ENCODE measurements at regions of chr14 and their contacts with region 1.

Region 1: GRCh38 chr14:70398706-70399431 is 18.0 kb downstream of the SYNJ2BP start:
- ATAC-seq: no peak
- H3K4me3 ChIP-seq: no peak overlapping the region
- H3K27ac ChIP-seq: no peak overlapping the region
- H3K4me1 ChIP-seq: no peaks in the 10 kb centered on the region

Region 2: DNA sequence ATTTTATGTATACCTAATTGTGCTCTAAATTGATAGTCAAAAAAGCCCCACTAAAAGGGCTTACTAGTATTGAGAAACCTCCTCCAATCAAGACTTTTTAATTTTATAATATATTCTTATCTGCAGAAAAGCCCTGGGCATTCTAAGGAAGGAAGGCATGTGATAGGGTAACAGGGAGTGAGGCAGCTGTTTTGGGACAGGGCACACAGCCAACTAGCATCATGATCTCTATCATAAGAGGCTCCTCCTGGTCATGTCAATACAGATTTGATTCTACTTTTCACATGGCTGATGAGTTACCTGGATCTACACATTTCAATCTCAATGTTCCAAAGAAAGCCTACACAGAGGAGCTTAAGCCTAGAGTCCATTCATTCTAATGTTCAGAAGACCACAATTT is 126.8 kb after region 1 on chr14:
- in situ Hi-C with region 1: no loop called
- ATAC-seq: no peak
- H3K4me3 ChIP-seq: no peak overlapping the region
- H3K27ac ChIP-seq: no peak overlapping the region
- H3K4me1 ChIP-seq: no peaks in the 10 kb centered on the region

Region 3: GRCh38 chr14:70567791-70568190 is 168.9 kb after region 1 on chr14:
- in situ Hi-C with region 1: loop called in 1 of 9 experiments (anchors 25 kb)
- ATAC-seq: peak in 3 of 8 experiments; percentile 78 to 88 (median 85)
- H3K4me3 ChIP-seq: no peak overlapping the region
- H3K27ac ChIP-seq: no peak overlapping the region
- H3K4me1 ChIP-seq: no peaks in the 10 kb centered on the region

Region 4: GRCh38 chr14:70698288-70698687 is 299.4 kb after region 1 on chr14:
- in situ Hi-C with region 1: no loop called
- ATAC-seq: peak in 4 of 8 experiments; percentile 39 to 88 (median 77)
- H3K4me3 ChIP-seq: no peak overlapping the region
- H3K27ac ChIP-seq: no peak overlapping the region
- H3K4me1 ChIP-seq: no peaks in the 10 kb centered on the region